ENCODE measurements at regions of chr5 and their contacts with region 1.

Region 1: GRCh38 chr5:159987031-159987674 is 21.8 kb upstream of the TTC1 start:
- DNase-seq: peak; percentile 87
- H3K4me3 ChIP-seq: peak overlapping the region; percentile 20 to 38
- H3K27ac ChIP-seq: peak overlapping the region; percentile 15 to 33
- H3K4me1 ChIP-seq: no peaks in the 10 kb centered on the region
- H3K27me3 ChIP-seq: no peaks in the 10 kb centered on the region
- CTCF ChIP-seq: peak; percentile 60 to 91 (median 75)
- POLR2A ChIP-seq: peak; percentile 36

Region 2: DNA sequence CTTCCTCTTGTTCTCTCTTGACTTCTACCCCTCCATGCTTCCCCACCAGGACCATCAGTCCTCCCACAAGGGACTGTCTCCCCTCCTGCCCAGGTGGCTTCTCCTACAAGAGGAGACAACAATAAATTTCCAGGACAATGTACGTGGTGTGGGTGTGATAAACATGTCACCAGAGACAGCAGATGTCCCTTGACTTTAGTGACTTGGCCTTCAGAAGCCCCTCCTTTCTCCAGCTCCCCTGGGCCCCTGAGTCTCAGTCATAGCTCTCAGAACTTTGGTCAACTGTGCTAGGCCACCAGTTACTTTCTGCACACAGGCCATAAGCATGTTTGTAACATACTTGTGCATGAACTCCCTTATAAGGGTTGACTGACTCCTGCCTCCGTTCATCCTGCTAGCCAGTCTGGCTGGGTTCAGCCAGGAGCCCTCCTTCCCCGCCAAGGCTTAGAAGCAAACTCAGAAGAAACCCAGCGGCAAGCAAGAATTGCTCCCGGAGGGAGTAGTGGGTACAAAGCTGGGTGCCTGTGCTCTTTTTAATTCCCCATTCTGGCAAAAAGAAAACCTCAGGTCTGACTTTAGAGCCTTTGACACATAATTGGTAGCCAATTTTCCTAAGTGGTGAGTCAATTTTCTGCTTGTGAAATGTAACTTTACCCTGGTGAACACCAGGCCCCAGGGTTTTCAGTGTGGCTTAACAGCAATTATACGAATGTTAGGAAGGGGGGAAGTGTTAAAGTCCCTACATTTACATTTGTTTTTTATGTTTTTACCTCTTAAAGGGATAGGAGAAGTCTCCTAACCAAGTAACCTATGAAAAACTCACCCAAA is 936.6 kb before region 1 on chr5:
- intact Hi-C with region 1: no loop called
- DNase-seq: no peak
- H3K4me3 ChIP-seq: no peak overlapping the region
- H3K27ac ChIP-seq: peak overlapping the region; percentile 62 to 63
- H3K4me1 ChIP-seq: no peaks in the 10 kb centered on the region
- H3K27me3 ChIP-seq: peaks cover 6% of the 10 kb centered on the region
- CTCF ChIP-seq: no peak
- POLR2A ChIP-seq: no peak

Region 3: DNA sequence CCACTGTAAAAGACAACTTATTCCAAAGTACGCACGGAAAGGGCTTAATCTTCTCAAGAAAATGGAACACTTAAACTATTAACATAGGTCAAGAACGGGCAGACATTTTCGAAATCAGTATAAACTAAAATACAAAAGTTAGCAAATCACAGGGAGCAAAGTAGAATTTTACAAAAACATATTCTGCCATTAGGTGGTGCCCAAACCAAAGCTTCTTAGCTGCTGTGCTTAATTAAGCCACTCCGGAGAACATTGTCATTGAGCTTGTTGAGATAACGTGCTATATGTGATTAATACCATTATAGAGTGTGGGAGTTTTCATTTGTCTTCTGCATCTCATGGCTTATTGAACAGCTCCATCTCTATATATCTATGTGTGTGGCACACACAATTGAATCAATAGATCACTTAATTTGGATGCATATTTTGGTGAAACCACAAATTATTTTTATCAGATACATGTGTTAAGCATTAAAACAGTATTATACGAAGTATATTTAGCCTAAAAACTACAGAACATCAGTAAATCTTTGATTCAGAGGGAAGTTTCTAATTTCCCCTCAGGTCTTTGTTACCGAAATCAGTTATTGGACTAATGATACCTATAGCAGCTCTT is 700.6 kb before region 1 on chr5:
- intact Hi-C with region 1: loop called (anchors 5 kb)
- DNase-seq: no peak
- H3K4me3 ChIP-seq: no peak overlapping the region
- H3K27ac ChIP-seq: no peak overlapping the region
- H3K4me1 ChIP-seq: no peaks in the 10 kb centered on the region
- H3K27me3 ChIP-seq: no peaks in the 10 kb centered on the region
- CTCF ChIP-seq: peak in 3 of 4 experiments; percentile 22 to 50 (median 30)
- POLR2A ChIP-seq: no peak

Region 4: GRCh38 chr5:159444441-159445082 is 542.6 kb before region 1 on chr5:
- intact Hi-C with region 1: loop called (anchors 5 kb)
- DNase-seq: peak; percentile 28
- H3K4me3 ChIP-seq: no peak overlapping the region
- H3K27ac ChIP-seq: no peak overlapping the region
- H3K4me1 ChIP-seq: no peaks in the 10 kb centered on the region
- H3K27me3 ChIP-seq: no peaks in the 10 kb centered on the region
- CTCF ChIP-seq: peak in 3 of 4 experiments; percentile 60 to 66 (median 62)
- POLR2A ChIP-seq: no peak

Region 5: GRCh38 chr5:159704160-159704559 is 283.0 kb before region 1 on chr5:
- intact Hi-C with region 1: no loop called
- DNase-seq: no peak
- H3K4me3 ChIP-seq: no peak overlapping the region
- H3K27ac ChIP-seq: no peak overlapping the region
- H3K4me1 ChIP-seq: no peaks in the 10 kb centered on the region
- H3K27me3 ChIP-seq: no peaks in the 10 kb centered on the region
- CTCF ChIP-seq: no peak
- POLR2A ChIP-seq: no peak

Region 6: GRCh38 chr5:160071516-160071915 is 84.4 kb after region 1 on chr5:
- intact Hi-C with region 1: no loop called
- DNase-seq: no peak
- H3K4me3 ChIP-seq: no peak overlapping the region
- H3K27ac ChIP-seq: no peak overlapping the region
- H3K4me1 ChIP-seq: no peaks in the 10 kb centered on the region
- H3K27me3 ChIP-seq: no peaks in the 10 kb centered on the region
- CTCF ChIP-seq: no peak
- POLR2A ChIP-seq: no peak

Measured in prostate gland (tissue), 2 donors.